ENCODE measurements at regions of chr3 and their contacts with region 1.

Region 1: GRCh38 chr3:186013312-186013711 is 75.5 kb upstream of the TRA2B start:
- DNase-seq: no peak
- ATAC-seq: no peak
- H3K4me3 ChIP-seq: no peak overlapping the region
- H3K4me3 Mint-ChIP-seq: no peak overlapping the region
- H3K27ac ChIP-seq: no peak overlapping the region
- H3K27ac Mint-ChIP-seq: no peak overlapping the region
- H3K4me1 ChIP-seq: no peaks in the 10 kb centered on the region
- H3K4me1 Mint-ChIP-seq: no peaks in the 10 kb centered on the region
- H3K27me3 ChIP-seq: peaks cover 0 to 24% of the 10 kb centered on the region in 2 experiments
- H3K27me3 Mint-ChIP-seq: peaks cover 13 to 28% of the 10 kb centered on the region in 2 donors

Region 2: DNA sequence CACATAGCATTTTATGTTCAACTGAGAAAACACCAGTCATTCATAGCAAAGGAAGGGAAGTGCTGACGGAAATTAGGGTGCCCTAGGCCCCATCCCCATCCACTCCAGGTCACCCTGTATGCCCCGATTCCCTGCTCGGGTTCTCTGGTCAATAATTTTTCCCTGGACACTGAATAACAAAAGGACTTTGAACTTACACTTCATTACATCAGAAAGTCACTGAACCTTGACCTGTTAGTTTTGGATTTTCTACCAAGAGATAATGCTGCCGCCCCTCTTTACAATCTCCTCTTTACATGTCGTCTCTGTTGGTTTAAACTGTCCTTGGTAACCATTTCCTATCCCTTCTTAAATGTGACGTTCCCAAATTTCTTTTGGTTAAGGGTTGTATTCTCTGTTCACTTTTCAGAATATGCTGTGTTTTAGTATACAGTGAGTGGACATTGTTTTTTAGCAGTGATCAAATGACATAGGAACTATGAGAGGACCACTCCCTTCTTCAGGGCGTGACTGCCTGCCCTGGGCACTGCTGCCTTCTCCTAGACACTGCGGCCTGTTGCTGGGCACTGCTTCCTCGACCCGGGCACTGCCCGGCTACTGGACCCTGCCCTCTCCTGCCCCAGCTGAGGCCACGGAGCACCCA is 586.0 kb after region 1 on chr3:
- CTCF ChIA-PET with region 1: interaction called in 1 of 2 experiments, 10 read pairs
- POLR2A ChIA-PET with region 1: no interaction called
- DNase-seq: no peak
- ATAC-seq: no peak
- H3K4me3 ChIP-seq: no peak overlapping the region
- H3K4me3 Mint-ChIP-seq: no peak overlapping the region
- H3K27ac ChIP-seq: no peak overlapping the region
- H3K27ac Mint-ChIP-seq: no peak overlapping the region
- H3K4me1 ChIP-seq: no peaks in the 10 kb centered on the region
- H3K4me1 Mint-ChIP-seq: no peaks in the 10 kb centered on the region
- H3K27me3 ChIP-seq: peaks cover 0 to 19% of the 10 kb centered on the region in 2 experiments
- H3K27me3 Mint-ChIP-seq: peaks cover 4 to 7% of the 10 kb centered on the region in 2 donors

Measured in T-cell (primary cell).